GM12878 (cell line): ENCODE measurements at regions of chr11 and their contacts with region 1.

Region 1: GRCh38 chr11:12893787-12894672 is 115.1 kb upstream of the RASSF10 start:
- DNase-seq: no peak
- ATAC-seq: peak; percentile 80
- H3K4me3 ChIP-seq: no peak overlapping the region
- H3K27ac ChIP-seq: no peak overlapping the region
- H3K4me1 ChIP-seq: no peaks in the 10 kb centered on the region
- H3K27me3 ChIP-seq: no peaks in the 10 kb centered on the region; a peak in 2 of 4 replicates
- CTCF ChIP-seq: peak; percentile 51 to 70 (median 70)
- EP300 ChIP-seq: no peak
- POLR2A ChIP-seq: no peak
- RAD21 ChIP-seq: peak; percentile 62

Region 2: DNA sequence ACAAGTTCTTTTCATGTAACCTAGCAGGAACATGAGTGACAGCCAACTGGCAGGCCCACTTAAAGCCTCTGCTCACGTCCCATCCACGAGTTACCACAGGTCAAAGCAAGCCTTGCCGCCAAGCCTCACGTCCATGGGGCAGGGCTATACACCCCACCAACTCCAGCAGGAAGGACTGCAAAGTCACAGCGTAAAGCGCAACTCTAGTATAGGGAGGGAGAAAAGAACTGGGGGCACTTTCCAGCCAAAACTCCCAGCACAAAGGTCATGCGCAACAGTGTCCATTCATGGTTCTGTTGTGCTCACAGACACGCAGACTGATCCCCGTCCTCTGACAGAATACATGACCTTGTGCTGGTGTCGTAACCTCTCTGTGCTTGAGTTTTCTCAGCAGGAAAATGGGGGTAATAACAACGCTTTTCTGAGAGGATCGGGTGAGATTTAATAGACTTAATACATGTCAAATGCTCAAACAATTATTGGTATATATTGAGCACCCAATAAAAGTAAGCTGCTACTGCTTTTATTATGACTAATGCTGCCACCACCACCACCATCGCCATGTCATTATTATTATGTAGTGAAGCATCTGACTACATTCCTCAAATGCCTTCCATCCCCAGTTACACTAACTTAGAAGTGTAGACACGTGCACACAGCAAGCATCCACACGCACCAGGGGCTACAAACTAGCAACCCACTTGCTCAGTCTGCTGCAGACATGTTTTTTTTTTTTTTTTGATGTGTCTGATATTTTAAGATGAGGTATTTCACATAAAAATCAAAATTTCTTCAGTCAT is 621.0 kb before region 1 on chr11:
- CTCF ChIA-PET with region 1: no interaction called
- POLR2A ChIA-PET with region 1: no interaction called
- RAD21 ChIA-PET with region 1: no interaction called
- SMC1A ChIA-PET with region 1: no interaction called
- in situ Hi-C with region 1: no loop called
- intact Hi-C with region 1: no loop called
- DNase-seq: no peak
- ATAC-seq: no peak
- H3K4me3 ChIP-seq: no peak overlapping the region
- H3K27ac ChIP-seq: no peak overlapping the region
- H3K4me1 ChIP-seq: no peaks in the 10 kb centered on the region
- H3K27me3 ChIP-seq: no peaks in the 10 kb centered on the region; a peak in 2 of 4 replicates
- CTCF ChIP-seq: no peak
- EP300 ChIP-seq: no peak
- POLR2A ChIP-seq: no peak
- RAD21 ChIP-seq: no peak

Region 3: DNA sequence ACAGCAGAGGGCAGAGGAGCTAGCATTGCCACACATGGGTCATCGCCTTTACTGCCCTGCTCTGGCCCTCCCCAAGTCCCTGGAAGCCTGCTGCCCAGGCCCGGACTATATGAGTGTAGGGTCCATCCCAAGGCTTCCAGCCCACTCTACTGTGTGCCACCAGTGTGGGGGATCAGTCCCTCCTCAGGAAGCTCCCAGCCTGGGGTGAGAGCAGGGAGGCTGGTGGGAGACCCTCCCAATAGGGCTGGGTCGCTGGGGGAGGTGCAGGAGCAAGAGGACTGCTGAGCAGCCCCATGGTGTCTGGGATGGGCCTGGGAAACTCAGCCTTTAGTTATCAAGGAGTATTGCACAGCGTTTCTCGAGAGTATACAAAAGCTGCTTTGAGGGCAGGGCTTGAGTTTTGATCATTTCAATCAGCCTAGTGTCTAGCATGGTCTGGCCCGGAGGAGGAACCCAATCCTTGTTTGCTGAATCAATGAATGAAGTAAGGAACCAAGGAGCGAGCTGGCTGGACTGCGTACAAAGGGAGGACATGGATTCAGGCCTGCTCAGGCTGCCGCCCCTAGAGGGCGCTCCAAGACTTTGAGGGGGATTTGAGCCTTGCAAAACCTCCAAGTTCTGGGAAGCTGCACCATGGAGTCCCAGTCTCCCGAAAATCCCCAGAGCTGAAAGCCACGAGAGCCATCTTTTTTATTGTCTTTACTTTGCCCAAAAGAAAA is 605.7 kb before region 1 on chr11:
- CTCF ChIA-PET with region 1: interaction called, 12 read pairs
- POLR2A ChIA-PET with region 1: no interaction called
- RAD21 ChIA-PET with region 1: interaction called, 4 read pairs
- SMC1A ChIA-PET with region 1: interaction called, 8 read pairs
- in situ Hi-C with region 1: no loop called
- intact Hi-C with region 1: loop called (anchors 2 kb)
- DNase-seq: no peak
- ATAC-seq: peak; percentile 79
- H3K4me3 ChIP-seq: no peak overlapping the region
- H3K27ac ChIP-seq: no peak overlapping the region
- H3K4me1 ChIP-seq: no peaks in the 10 kb centered on the region
- H3K27me3 ChIP-seq: no peaks in the 10 kb centered on the region
- CTCF ChIP-seq: peak; percentile 68 to 93 (median 88)
- EP300 ChIP-seq: no peak
- POLR2A ChIP-seq: no peak
- RAD21 ChIP-seq: peak; percentile 65

Region 4: DNA sequence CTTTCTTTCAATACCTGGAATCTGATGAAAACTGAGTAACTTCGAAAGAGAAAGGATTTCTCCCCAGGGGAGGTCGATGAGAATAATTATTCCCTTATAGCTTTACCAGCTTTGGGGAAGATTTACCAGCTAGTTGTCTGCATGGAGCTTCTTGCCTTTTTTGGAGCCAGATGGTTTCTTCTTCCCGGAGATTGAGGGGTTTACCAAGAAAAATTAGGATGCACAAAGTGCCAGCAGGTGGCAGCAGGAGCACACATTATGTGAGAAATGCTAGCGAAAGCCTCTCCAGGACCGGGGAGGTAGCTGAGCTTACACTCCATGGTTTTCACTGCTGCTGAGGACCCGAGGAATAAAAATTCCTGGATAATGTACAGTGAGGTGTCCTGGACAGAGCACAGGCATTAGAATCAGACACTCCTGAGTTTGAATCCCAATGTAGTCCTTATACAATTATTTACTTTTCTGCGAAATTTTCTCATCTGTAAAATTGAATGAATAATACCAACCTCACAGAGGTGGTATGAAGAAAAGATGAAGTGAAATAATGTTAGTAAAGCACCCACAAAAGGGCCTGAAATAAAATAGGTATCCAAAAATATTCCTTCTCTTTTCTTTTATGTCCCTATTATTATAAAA is 562.7 kb before region 1 on chr11:
- CTCF ChIA-PET with region 1: interaction called, 91 read pairs
- POLR2A ChIA-PET with region 1: no interaction called
- RAD21 ChIA-PET with region 1: interaction called, 44 read pairs
- SMC1A ChIA-PET with region 1: interaction called, 41 read pairs
- in situ Hi-C with region 1: loop called (anchors 5 kb)
- intact Hi-C with region 1: loop called (anchors 1 kb)
- DNase-seq: peak; percentile 5
- ATAC-seq: peak; percentile 76
- H3K4me3 ChIP-seq: no peak overlapping the region
- H3K27ac ChIP-seq: no peak overlapping the region
- H3K4me1 ChIP-seq: no peaks in the 10 kb centered on the region
- H3K27me3 ChIP-seq: no peaks in the 10 kb centered on the region
- CTCF ChIP-seq: peak; percentile 67 to 84 (median 68)
- EP300 ChIP-seq: no peak
- POLR2A ChIP-seq: no peak
- RAD21 ChIP-seq: peak; percentile 81

Region 5: GRCh38 chr11:12411806-12412727 is 482.0 kb before region 1 on chr11:
- CTCF ChIA-PET with region 1: no interaction called
- POLR2A ChIA-PET with region 1: no interaction called
- RAD21 ChIA-PET with region 1: no interaction called
- SMC1A ChIA-PET with region 1: no interaction called
- in situ Hi-C with region 1: loop called (anchors 10 kb)
- intact Hi-C with region 1: loop called (anchors 5 kb)
- DNase-seq: no peak
- ATAC-seq: peak; percentile 86
- H3K4me3 ChIP-seq: no peak overlapping the region
- H3K27ac ChIP-seq: no peak overlapping the region
- H3K4me1 ChIP-seq: no peaks in the 10 kb centered on the region
- H3K27me3 ChIP-seq: no peaks in the 10 kb centered on the region; a peak in 1 of 4 replicates
- CTCF ChIP-seq: peak; percentile 26 to 51 (median 50); a peak in 5 of 6 replicates
- EP300 ChIP-seq: no peak
- POLR2A ChIP-seq: no peak
- RAD21 ChIP-seq: peak; percentile 40; the same call in 1 of the 2 replicates